Mammary epithelial cell (primary cell): ENCODE measurements at regions of chrX and their contacts with region 1.

Region 1: GRCh38 chrX:19094654-19095053 is 27.6 kb downstream of the ADGRG2 start:
- DNase-seq: no peak
- H3K4me3 ChIP-seq: no peak overlapping the region
- H3K27ac ChIP-seq: no peak overlapping the region
- H3K4me1 ChIP-seq: no peaks in the 10 kb centered on the region
- H3K27me3 ChIP-seq: no peaks in the 10 kb centered on the region
- CTCF ChIP-seq: no peak

Region 2: GRCh38 chrX:19049110-19049509 is 45.5 kb before region 1 on chrX:
- CTCF ChIA-PET with region 1: no interaction called
- dilution Hi-C with region 1: no loop called
- in situ Hi-C with region 1: no loop called
- intact Hi-C with region 1: no loop called
- DNase-seq: no peak
- H3K4me3 ChIP-seq: no peak overlapping the region
- H3K27ac ChIP-seq: no peak overlapping the region
- H3K4me1 ChIP-seq: no peaks in the 10 kb centered on the region
- H3K27me3 ChIP-seq: no peaks in the 10 kb centered on the region
- CTCF ChIP-seq: no peak

Region 3: DNA sequence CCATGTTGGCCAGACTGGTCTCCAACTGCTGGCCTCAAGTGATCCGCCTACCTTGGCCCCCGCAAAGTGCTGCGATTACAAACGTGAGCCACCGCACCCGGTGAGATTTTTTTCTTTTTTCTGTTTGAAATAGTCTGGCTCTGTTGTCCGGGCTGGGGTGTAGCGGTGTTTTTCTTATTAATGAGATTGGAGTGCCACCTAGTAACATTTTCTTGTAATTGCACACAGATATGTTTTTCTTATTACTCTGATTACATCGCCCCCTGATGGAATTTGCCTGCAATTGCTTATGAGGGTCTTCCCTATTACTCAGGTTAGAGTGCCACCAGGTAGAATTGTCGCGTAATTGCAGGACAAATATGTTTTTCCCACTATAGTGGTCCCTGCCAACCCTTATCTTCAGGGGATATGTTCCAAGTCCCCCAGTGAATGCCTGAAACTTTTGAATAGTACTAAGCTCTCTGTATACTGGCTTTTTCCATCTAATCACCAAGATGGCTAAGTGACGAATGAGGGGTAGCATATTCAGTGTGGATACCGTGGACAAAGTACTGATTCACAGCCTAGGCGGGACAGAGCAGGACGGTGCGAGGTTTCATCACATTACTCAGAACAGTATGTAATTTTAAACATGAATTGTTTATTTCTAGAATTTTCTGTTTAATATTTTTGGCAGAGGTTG is 240.4 kb after region 1 on chrX:
- CTCF ChIA-PET with region 1: no interaction called
- dilution Hi-C with region 1: no loop called
- in situ Hi-C with region 1: no loop called
- intact Hi-C with region 1: loop called (anchors 1 kb)
- DNase-seq: peak; percentile 5
- H3K4me3 ChIP-seq: no peak overlapping the region
- H3K27ac ChIP-seq: no peak overlapping the region
- H3K4me1 ChIP-seq: no peaks in the 10 kb centered on the region
- H3K27me3 ChIP-seq: no peaks in the 10 kb centered on the region
- CTCF ChIP-seq: peak; percentile 23 to 41